K562 (cell line): ENCODE measurements at regions of chr2 and their contacts with region 1.

Region 1: GRCh38 chr2:74178201-74179062 is at the start of gene MOB1A:
- DNase-seq: peak; percentile 96 to 99 (median 98)
- ATAC-seq: peak; percentile 93
- H3K4me3 ChIP-seq: peak within 1 kb of the TSS; percentile 81
- H3K27ac ChIP-seq: peak within 1 kb of the TSS; percentile 83
- H3K4me1 ChIP-seq: peaks cover 14 to 19% of the 10 kb centered on the region in 2 experiments
- H3K27me3 ChIP-seq: no peaks in the 10 kb centered on the region
- CTCF ChIP-seq: peak in 1 of 3 experiments; percentile 19; a peak in 1 of 6 replicates
- EP300 ChIP-seq: no peak
- POLR2A ChIP-seq: peak; percentile 91
- RAD21 ChIP-seq: peak in 1 of 2 experiments; percentile 12; a peak in 1 of 4 replicates
- polyA plus RNA-seq, gene MOB1A: 24.8 to 27.0 TPM

Region 2: DNA sequence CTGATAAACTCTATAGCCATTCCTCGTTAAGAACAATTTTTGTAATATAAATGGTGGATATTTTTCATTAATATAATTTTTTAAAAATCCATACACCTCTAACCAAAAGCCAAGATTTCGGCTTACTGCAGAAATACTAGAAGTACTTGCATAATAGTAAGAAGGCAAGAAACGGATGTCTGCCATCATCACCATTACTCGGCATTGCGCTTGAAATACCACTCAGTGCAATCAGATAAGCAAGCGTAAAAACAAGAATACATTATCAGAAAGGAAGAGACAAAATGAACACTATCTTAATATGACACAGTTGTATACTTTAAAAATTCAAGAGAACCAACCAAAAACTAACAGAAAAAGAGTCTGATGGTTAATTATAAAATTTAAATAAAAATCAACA is 15.5 kb before region 1 on chr2:
- CTCF ChIA-PET with region 1: no interaction called
- POLR2A ChIA-PET with region 1: interaction called, 25 read pairs
- in situ Hi-C with region 1: no loop called
- intact Hi-C with region 1: no loop called
- DNase-seq: no peak
- ATAC-seq: peak; percentile 58
- H3K4me3 ChIP-seq: no peak overlapping the region
- H3K27ac ChIP-seq: no peak overlapping the region
- H3K4me1 ChIP-seq: peaks cover 0 to 9% of the 10 kb centered on the region in 2 experiments; a peak in 3 of 5 replicates
- H3K27me3 ChIP-seq: no peaks in the 10 kb centered on the region
- CTCF ChIP-seq: no peak
- EP300 ChIP-seq: peak; percentile 48; the same call in 1 of the 2 replicates
- POLR2A ChIP-seq: no peak
- RAD21 ChIP-seq: no peak

Region 3: DNA sequence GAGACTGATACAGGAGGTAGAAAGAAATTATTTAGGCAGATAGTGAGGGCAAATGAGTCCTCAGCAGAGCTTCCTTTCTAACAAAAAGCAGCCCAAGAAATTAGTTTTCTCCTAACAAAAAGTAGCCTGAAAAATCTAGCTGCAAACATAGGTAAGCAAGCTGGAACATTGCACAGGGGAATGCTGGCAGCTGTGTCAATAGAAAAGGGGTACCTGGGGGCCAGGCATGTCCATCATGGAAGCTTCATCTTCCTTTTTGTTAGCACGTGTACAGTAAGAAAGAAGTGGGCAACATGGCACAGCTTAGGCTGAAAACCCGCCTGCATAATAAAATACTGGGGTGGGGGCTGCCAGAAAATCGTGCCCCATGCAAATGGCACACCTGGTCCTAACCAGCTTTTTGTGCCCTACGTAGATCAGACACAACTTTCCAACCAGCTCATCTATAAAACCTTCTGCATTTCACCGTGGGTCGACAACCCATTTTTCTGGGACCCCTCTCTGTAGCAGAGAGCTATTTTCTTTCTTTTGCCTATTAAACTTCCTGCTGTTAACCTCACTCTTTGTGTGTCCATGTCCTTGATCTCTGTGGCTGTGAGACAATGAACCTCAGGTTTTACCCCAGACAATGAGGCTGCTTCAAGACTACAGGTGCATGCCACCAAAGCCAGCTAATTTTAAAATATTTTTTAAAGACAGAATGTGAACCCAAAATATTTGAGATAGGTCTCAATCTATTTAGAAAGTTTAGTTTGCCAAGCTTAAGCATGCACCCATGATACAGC is 13.4 kb after region 1 on chr2:
- CTCF ChIA-PET with region 1: interaction called, 3 read pairs
- POLR2A ChIA-PET with region 1: interaction called, 98 read pairs
- in situ Hi-C with region 1: no loop called
- intact Hi-C with region 1: no loop called
- DNase-seq: no peak
- ATAC-seq: no peak
- H3K4me3 ChIP-seq: no peak overlapping the region
- H3K27ac ChIP-seq: no peak overlapping the region
- H3K4me1 ChIP-seq: peaks cover 9 to 10% of the 10 kb centered on the region in 2 experiments
- H3K27me3 ChIP-seq: no peaks in the 10 kb centered on the region
- CTCF ChIP-seq: no peak
- EP300 ChIP-seq: no peak
- POLR2A ChIP-seq: no peak
- RAD21 ChIP-seq: no peak

Region 4: GRCh38 chr2:74198461-74199274 is 20.2 kb after region 1 on chr2 and contains the start of gene MTHFD2:
- CTCF ChIA-PET with region 1: interaction called, 3 read pairs
- POLR2A ChIA-PET with region 1: interaction called, 98 read pairs
- in situ Hi-C with region 1: no loop called
- intact Hi-C with region 1: loop called (anchors 1 kb)
- DNase-seq: peak; percentile 93 to 98 (median 95)
- ATAC-seq: peak; percentile 91
- H3K4me3 ChIP-seq: peak within 1 kb of the TSS; percentile 72
- H3K27ac ChIP-seq: peak within 1 kb of the TSS; percentile 100
- H3K4me1 ChIP-seq: peaks cover 19 to 32% of the 10 kb centered on the region in 2 experiments
- H3K27me3 ChIP-seq: no peaks in the 10 kb centered on the region
- CTCF ChIP-seq: peak; percentile 83 to 86 (median 85)
- EP300 ChIP-seq: peak; percentile 58
- POLR2A ChIP-seq: peak; percentile 99
- RAD21 ChIP-seq: peak; percentile 72 to 82
- polyA plus RNA-seq, gene MTHFD2: 476 to 520 TPM

Region 5: DNA sequence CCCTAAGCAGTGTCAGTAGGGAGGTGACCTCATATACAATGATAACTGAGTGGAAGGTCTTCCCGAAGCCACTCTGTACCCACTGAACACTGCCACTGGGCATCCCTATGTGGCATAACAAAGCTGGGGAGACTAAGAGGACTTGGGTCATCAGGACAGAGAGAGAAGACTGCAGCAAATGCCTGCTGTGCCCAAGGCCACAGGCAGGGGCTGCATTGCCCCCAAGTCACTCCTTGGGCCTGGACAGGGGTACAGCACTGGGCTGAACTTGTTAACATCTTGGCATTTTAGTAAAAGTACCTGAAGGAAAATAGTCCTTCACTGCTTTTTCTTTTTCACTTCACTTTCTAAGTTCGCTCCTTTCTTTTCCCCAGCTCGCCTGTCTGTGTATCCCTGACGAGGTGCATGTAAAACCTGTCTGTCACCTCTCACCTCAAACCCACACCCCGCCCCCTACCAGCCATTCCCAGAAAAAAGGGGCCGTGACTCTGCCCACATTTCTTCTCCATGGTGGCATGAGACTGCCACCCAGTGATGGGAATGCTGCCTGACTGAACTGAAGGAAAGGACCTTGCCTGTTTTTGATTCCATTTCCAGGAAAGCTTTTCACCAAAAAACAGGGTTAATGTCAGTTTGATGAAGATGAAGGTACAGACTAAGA is 82.9 kb after region 1 on chr2:
- CTCF ChIA-PET with region 1: no interaction called
- POLR2A ChIA-PET with region 1: no interaction called
- in situ Hi-C with region 1: no loop called
- intact Hi-C with region 1: no loop called
- DNase-seq: no peak
- ATAC-seq: no peak
- H3K4me3 ChIP-seq: no peak overlapping the region
- H3K27ac ChIP-seq: no peak overlapping the region
- H3K4me1 ChIP-seq: peaks cover 0 to 3% of the 10 kb centered on the region in 2 experiments; a peak in 1 of 5 replicates
- H3K27me3 ChIP-seq: peaks cover 0 to 24% of the 10 kb centered on the region in 2 experiments; a peak in 2 of 5 replicates
- CTCF ChIP-seq: peak; percentile 30 to 46 (median 32); a peak in 3 of 6 replicates
- EP300 ChIP-seq: no peak
- POLR2A ChIP-seq: no peak
- RAD21 ChIP-seq: peak; percentile 26 to 40; a peak in 2 of 4 replicates